ENCODE measurements at regions of chr5 and their contacts with region 1.

Region 1: DNA sequence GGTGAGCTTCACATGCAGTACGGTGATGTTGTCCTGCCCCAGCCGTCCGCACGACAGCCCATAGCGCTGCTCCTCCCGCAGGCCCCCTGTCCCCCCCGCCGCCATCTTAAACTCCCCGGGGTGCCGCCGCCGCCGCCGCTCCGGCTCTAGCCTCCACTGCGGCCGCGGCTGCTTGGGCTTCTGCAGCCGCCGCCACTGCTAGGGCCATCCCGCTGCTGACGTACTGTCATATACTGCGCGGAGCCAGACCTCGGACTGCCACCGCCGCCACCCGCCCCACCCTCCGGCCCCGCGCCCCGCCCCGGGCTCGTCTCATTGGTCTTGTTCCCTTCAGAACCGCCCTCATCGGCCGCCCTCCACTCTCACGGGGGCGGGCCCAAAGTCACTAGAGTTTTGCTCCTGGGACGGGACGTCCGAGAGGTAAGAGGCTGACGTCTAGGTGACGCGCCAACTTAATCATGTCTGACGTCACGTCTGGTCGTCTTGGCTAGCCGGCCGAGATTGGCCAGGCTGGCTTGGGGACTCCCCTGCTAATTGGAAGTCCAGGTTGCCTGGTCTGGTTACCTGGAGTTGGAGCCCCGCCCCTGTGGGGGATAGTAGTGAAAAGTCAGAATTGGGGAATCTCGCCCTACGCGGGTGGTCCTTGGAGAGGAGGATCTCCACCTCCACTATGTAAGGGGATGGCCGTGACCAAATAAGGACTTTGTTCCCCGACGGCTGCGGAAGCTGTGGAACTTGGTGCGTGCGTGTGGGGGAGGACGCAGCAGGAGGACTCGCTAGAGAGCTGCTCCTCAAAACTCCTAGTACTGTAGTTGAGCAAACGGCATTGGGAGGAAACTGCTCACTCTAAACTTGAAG is at the start of gene ELL2:
- DNase-seq: peak; percentile 94
- H3K4me3 Mint-ChIP-seq: peak within 1 kb of the TSS; percentile 92
- H3K27ac Mint-ChIP-seq: peak within 1 kb of the TSS; percentile 98
- H3K4me1 Mint-ChIP-seq: peaks cover 51% of the 10 kb centered on the region
- H3K27me3 Mint-ChIP-seq: no peaks in the 10 kb centered on the region
- total RNA-seq, gene ELL2: 124 and 135 TPM in 2 replicates

Region 2: GRCh38 chr5:95870105-95870672 is 91.7 kb before region 1 on chr5:
- intact Hi-C with region 1: loop called (anchors 2 kb)
- DNase-seq: peak; percentile 28
- H3K4me3 Mint-ChIP-seq: peak overlapping the region; percentile 37
- H3K27ac Mint-ChIP-seq: peak overlapping the region; percentile 89
- H3K4me1 Mint-ChIP-seq: peaks cover 45% of the 10 kb centered on the region
- H3K27me3 Mint-ChIP-seq: peaks cover 4% of the 10 kb centered on the region

Region 3: DNA sequence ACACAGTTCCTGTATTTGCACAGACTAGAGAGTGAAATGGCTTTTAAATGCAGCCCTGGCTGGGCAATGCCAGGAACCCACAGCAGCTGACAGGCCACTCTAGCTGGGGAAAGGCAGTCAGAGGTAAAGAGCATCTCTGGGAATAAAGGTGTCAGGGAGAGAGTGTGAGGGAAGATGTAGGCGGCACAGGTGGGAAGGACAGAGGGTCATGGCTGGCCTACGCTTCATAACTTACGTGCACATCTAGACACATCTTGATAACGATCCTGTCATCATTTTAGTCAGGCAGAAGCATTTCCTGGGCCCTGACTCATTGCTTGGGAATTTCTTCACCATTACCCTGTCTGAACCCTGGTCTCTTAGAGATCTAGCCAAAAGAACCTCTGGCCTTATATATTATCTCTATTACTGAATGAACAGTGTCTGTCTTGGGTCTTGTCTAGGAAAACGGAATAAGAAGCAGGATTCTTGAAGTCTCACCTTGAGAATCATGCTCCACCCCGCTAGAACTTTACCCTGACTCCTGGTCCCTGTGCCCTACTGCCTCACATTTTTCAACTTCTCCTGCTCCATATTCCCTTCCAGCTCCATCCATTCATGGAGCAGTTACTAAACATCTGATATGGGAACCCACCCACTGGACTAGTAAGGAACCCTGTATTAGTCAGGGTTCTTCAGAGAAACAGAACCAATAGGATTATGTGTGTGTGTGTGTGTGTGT is 106.2 kb after region 1 on chr5:
- intact Hi-C with region 1: loop called (anchors 1 kb)
- DNase-seq: no peak
- H3K4me3 Mint-ChIP-seq: peak overlapping the region; percentile 19
- H3K27ac Mint-ChIP-seq: peak overlapping the region; percentile 91
- H3K4me1 Mint-ChIP-seq: peaks cover 74% of the 10 kb centered on the region
- H3K27me3 Mint-ChIP-seq: no peaks in the 10 kb centered on the region

Region 4: DNA sequence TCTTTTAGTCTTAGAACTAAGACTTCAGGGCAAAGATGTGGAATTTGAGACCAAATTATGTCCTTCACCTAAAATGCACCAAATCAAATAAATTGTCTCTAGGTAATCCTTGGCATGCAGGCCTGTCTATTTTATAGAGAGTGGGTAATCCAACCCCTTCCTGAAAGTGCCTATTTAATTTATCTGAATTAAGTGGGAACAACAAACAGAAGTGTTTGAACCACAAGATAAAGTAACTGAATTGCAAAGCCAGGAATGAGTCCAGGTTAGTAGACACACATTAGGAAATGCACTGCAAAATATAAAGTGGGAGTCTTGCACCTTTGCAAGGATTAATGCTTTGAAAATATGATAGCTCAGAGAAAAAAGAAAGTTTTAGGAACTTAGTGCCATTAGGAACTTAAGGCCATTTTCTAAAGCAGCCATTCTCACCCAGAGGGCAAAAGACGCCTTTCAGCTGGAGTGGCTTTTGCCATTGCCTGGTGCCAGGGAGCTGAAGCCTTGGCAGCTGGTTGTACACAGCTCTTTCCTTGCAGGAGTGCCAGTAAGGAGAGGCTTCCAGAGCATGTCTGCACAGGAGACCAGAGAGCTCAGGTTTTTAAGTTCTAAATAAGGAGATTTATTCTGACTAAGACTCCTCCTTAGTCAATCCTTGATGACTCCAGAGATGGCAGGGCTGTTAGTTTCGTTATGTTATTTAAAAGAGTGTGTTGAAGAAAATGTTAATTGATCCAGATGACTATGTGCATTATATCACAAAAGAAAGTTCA is 151.5 kb after region 1 on chr5:
- intact Hi-C with region 1: loop called (anchors 2 kb)
- DNase-seq: no peak
- H3K4me3 Mint-ChIP-seq: no peak overlapping the region
- H3K27ac Mint-ChIP-seq: peak overlapping the region; percentile 47
- H3K4me1 Mint-ChIP-seq: peaks cover 50% of the 10 kb centered on the region
- H3K27me3 Mint-ChIP-seq: no peaks in the 10 kb centered on the region

Region 5: GRCh38 chr5:96279801-96280542 is 318.1 kb after region 1 on chr5:
- intact Hi-C with region 1: loop called (anchors 5 kb)
- DNase-seq: no peak
- H3K4me3 Mint-ChIP-seq: no peak overlapping the region
- H3K27ac Mint-ChIP-seq: peak overlapping the region; percentile 47
- H3K4me1 Mint-ChIP-seq: peaks cover 25% of the 10 kb centered on the region
- H3K27me3 Mint-ChIP-seq: peaks cover 2% of the 10 kb centered on the region

Region 6: DNA sequence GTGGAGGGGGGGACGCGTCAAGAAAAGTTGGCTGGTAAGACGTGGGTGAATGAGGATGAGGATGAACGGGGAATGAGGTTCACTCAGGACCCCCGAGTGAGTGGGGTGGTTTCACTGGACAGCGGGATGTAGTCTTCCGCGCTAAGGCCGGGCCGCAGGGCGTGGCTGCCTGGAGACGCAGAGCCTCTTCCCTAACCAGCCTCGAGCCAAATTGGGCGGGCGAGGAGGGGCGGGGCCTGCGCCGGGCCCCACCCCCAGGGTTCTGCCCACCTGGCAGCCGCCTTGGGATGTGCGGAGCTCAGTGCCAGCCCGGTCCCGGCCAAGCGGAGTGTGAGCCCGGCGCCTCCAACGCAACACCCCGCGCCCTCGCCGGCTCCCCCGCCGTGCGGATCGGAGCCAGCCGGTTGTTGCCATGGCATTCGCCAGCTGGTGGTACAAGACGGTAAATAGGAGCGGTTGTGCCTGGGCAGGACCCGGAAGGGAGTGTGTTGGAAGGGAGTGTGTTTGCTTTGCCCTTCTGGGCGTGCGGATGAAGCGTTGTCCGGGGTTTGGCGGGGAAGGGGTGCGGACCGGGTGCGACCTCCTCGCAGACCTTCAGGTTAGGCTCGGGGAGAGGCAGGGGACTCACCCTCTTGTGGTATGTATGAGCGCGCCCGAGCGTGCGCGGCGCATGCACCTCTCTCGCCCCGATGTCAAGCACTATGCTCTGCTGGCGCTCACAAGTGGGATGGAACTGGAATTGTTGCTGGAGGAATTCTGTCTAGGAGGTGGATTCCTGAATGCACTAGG is 701.1 kb after region 1 on chr5:
- intact Hi-C with region 1: loop called (anchors 1 kb)
- DNase-seq: peak; percentile 82
- H3K4me3 Mint-ChIP-seq: peak overlapping the region; percentile 90
- H3K27ac Mint-ChIP-seq: peak overlapping the region; percentile 96
- H3K4me1 Mint-ChIP-seq: peaks cover 55% of the 10 kb centered on the region
- H3K27me3 Mint-ChIP-seq: peaks cover 26% of the 10 kb centered on the region